Activated CD4-positive, alpha-beta T cell treated with anti-CD3 and anti-CD28 coated beads for 36 hours (primary cell): ENCODE measurements at regions of chr11 and their contacts with region 1.

Region 1: GRCh38 chr11:6362873-6363678 is 27.2 kb upstream of the SMPD1 start:
- DNase-seq: peak; percentile 86
- ATAC-seq: peak; percentile 97
- H3K4me3 Mint-ChIP-seq: no peak overlapping the region
- H3K27ac Mint-ChIP-seq: no peak overlapping the region
- H3K4me1 Mint-ChIP-seq: no peaks in the 10 kb centered on the region
- H3K27me3 Mint-ChIP-seq: no peaks in the 10 kb centered on the region

Region 2: GRCh38 chr11:5992604-5993251 is 370.3 kb before region 1 on chr11:
- CTCF ChIA-PET with region 1: interaction called, 10 read pairs
- POLR2A ChIA-PET with region 1: no interaction called
- intact Hi-C with region 1: no loop called
- DNase-seq: no peak
- ATAC-seq: no peak
- H3K4me3 Mint-ChIP-seq: no peak overlapping the region
- H3K27ac Mint-ChIP-seq: no peak overlapping the region
- H3K4me1 Mint-ChIP-seq: no peaks in the 10 kb centered on the region
- H3K27me3 Mint-ChIP-seq: peaks cover 8% of the 10 kb centered on the region

Region 3: DNA sequence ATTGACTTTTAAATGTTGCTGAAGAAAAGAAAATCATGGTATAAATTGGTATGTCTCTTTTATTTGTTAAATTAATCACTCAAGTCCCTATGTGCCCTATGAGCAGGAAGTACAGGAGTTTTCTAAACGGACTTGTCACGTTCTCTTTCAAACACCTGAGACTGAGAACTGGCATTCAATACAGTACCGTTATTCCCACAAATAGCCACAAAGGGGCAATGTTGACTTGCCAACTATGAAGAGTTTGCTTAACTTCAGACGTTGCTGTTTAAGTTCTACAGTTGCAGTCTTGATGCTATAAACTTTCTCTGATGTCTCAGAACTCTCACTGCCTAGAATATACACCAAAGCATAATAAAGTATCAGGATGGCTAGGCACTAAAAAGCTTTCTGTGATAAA is 340.1 kb before region 1 on chr11:
- CTCF ChIA-PET with region 1: interaction called, 13 read pairs
- POLR2A ChIA-PET with region 1: no interaction called
- intact Hi-C with region 1: loop called in 1 of 2 experiments (anchors 1 kb)
- DNase-seq: no peak
- ATAC-seq: peak; percentile 55
- H3K4me3 Mint-ChIP-seq: no peak overlapping the region
- H3K27ac Mint-ChIP-seq: no peak overlapping the region
- H3K4me1 Mint-ChIP-seq: no peaks in the 10 kb centered on the region
- H3K27me3 Mint-ChIP-seq: peaks cover 21% of the 10 kb centered on the region

Region 4: GRCh38 chr11:6251120-6251733 is 111.8 kb before region 1 on chr11:
- CTCF ChIA-PET with region 1: interaction called, 78 read pairs
- POLR2A ChIA-PET with region 1: no interaction called
- intact Hi-C with region 1: loop called in 1 of 2 experiments (anchors 1 kb)
- DNase-seq: peak; percentile 77
- ATAC-seq: peak; percentile 86
- H3K4me3 Mint-ChIP-seq: no peak overlapping the region
- H3K27ac Mint-ChIP-seq: no peak overlapping the region
- H3K4me1 Mint-ChIP-seq: no peaks in the 10 kb centered on the region
- H3K27me3 Mint-ChIP-seq: no peaks in the 10 kb centered on the region

Region 5: GRCh38 chr11:6258571-6259081 is 104.5 kb before region 1 on chr11:
- CTCF ChIA-PET with region 1: interaction called, 78 read pairs
- POLR2A ChIA-PET with region 1: no interaction called
- intact Hi-C with region 1: no loop called
- DNase-seq: peak; percentile 34
- ATAC-seq: peak; percentile 43
- H3K4me3 Mint-ChIP-seq: peak overlapping the region; percentile 40
- H3K27ac Mint-ChIP-seq: no peak overlapping the region
- H3K4me1 Mint-ChIP-seq: no peaks in the 10 kb centered on the region
- H3K27me3 Mint-ChIP-seq: peaks cover 14% of the 10 kb centered on the region

Region 6: GRCh38 chr11:6298605-6299004 is 64.5 kb before region 1 on chr11:
- CTCF ChIA-PET with region 1: interaction called, 7 read pairs
- POLR2A ChIA-PET with region 1: no interaction called
- intact Hi-C with region 1: loop called in 1 of 2 experiments (anchors 2 kb)
- DNase-seq: peak; percentile 59
- ATAC-seq: peak; percentile 77
- H3K4me3 Mint-ChIP-seq: no peak overlapping the region
- H3K27ac Mint-ChIP-seq: no peak overlapping the region
- H3K4me1 Mint-ChIP-seq: no peaks in the 10 kb centered on the region
- H3K27me3 Mint-ChIP-seq: peaks cover 9% of the 10 kb centered on the region

Region 7: GRCh38 chr11:6315811-6316425 is 47.2 kb before region 1 on chr11:
- CTCF ChIA-PET with region 1: interaction called, 15 read pairs
- POLR2A ChIA-PET with region 1: interaction called, 3 read pairs
- intact Hi-C with region 1: no loop called
- DNase-seq: peak; percentile 59
- ATAC-seq: peak; percentile 33
- H3K4me3 Mint-ChIP-seq: no peak overlapping the region
- H3K27ac Mint-ChIP-seq: no peak overlapping the region
- H3K4me1 Mint-ChIP-seq: peaks cover 12% of the 10 kb centered on the region
- H3K27me3 Mint-ChIP-seq: peaks cover 42% of the 10 kb centered on the region

Region 8: DNA sequence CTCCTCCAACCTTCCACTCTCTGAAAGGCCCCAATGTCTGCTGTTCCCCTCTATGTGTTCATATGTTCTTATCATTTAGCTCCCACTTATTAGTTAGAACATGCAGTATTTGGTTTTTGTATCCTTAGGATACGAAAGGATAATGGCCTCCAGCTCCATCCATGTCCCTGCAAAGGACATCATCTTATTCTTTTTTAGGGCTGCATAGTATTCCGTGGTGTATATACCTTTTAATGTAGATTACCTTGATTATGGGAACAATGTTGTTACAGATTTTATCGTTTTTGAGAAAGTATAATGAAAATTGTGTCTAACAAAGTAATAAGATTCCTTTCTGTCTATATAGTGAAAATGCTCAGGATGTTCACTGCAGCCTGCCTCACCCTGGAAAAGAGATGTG is 26.8 kb before region 1 on chr11:
- CTCF ChIA-PET with region 1: no interaction called
- POLR2A ChIA-PET with region 1: no interaction called
- intact Hi-C with region 1: no loop called
- DNase-seq: no peak
- ATAC-seq: no peak
- H3K4me3 Mint-ChIP-seq: no peak overlapping the region
- H3K27ac Mint-ChIP-seq: no peak overlapping the region
- H3K4me1 Mint-ChIP-seq: no peaks in the 10 kb centered on the region
- H3K27me3 Mint-ChIP-seq: peaks cover 9% of the 10 kb centered on the region